ENCODE measurements at regions of chr4 and their contacts with region 1.

Region 1: DNA sequence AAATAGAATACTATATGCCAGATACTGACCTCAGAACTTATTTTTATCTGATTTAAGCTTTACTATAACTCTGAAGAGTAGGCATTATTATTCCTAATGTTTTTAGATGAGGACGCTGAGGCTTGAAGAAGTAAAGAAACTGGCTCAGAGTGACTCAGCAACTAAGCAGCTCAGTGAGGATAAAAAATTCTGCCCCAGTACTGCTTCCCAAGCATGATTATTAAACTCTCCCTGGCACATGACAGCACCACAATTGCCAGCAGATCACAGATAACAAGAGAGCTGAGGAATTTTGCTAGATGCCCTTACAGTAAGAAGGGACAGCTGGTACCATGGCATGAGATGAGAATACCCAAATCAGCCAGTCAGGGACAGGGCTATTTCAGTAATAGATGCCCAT is 219.4 kb downstream of the NKX6-1 start:
- DNase-seq: no peak

Region 2: DNA sequence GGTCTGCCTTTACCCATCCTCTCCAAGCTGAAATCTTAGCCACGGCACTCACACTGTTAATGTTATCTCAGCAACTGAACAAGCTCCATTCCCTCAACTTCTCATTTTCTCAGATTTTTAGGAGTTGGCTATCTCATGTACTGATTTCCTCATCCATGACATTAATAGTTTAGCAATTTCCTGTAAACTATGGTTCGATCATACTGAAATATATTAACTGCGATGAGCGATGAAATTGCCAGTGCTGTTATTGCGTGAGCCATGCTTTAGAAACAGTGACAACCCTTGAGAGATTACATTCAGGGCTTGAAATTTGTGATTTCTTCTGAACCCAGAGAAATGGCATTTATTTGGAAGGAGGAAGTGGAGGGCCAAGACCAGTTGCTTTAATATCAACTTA is 520.1 kb before region 1 on chr4:
- intact Hi-C with region 1: loop called (anchors 5 kb)
- DNase-seq: no peak